Left ventricle myocardium inferior (tissue), 1 donor: ENCODE measurements at regions of chr18 and their contacts with region 1.

Region 1: GRCh38 chr18:63823518-63824219 is 48.5 kb downstream of the SERPINB7 start:
- DNase-seq: peak; percentile 32
- H3K4me3 ChIP-seq: no peak overlapping the region
- H3K27ac ChIP-seq: no peak overlapping the region
- H3K4me1 ChIP-seq: no peaks in the 10 kb centered on the region
- H3K27me3 ChIP-seq: peaks cover 53% of the 10 kb centered on the region
- CTCF ChIP-seq: peak; percentile 57

Region 2: DNA sequence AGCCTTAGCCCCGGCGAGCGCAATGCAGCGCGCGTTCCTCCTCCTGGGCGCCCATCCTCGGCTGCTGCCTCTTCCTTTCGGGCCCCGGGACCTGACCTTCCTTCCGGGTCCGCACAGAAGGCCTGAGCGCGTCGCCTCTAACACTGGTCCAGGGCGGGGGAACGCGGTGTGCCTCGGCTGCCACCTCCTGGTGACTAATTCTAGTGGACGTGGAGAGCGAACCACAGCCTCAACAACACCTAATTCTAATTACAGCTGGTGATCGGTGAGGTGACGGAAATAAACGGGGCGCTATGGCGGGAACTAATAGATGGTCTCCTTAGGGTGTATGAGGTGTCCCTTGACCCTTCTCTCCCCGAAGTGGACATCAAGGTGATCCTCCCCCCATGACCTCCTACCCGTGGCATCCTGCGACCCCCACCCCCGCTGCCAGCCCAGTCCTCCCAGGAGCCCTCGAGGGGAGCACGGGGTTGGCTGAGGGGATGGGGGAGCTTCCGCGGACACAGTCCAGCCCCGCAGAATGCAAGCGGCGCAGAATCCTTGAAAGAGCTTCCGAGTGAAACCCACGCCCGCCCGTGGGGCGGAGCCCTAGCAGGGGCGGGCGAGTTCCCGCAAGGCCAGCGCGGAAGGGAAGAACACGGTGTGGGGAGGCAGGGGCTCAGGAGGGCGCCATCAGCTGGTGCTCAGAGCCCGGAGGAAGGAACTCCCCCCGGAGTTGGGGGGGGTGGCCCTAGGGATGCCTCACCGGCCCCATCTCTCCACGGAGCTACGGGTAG is 112.7 kb after region 1 on chr18:
- intact Hi-C with region 1: loop called (anchors 10 kb)
- DNase-seq: peak; percentile 81
- H3K4me3 ChIP-seq: peak overlapping the region; percentile 67
- H3K27ac ChIP-seq: no peak overlapping the region
- H3K4me1 ChIP-seq: peaks cover 11% of the 10 kb centered on the region
- H3K27me3 ChIP-seq: peaks cover 58% of the 10 kb centered on the region
- CTCF ChIP-seq: peak; percentile 84